ENCODE measurements at regions of chr7 and their contacts with region 1.

Region 1: GRCh38 chr7:123494193-123494796 is 40.1 kb downstream of the IQUB start:
- DNase-seq: no peak
- ATAC-seq: peak in 2 of 4 donors; percentile 58 to 74
- H3K4me3 ChIP-seq: no peak overlapping the region
- H3K27ac ChIP-seq: no peak overlapping the region
- H3K4me1 ChIP-seq: no peaks in the 10 kb centered on the region
- H3K27me3 ChIP-seq: no peaks in the 10 kb centered on the region
- CTCF ChIP-seq: peak; percentile 80

Region 2: DNA sequence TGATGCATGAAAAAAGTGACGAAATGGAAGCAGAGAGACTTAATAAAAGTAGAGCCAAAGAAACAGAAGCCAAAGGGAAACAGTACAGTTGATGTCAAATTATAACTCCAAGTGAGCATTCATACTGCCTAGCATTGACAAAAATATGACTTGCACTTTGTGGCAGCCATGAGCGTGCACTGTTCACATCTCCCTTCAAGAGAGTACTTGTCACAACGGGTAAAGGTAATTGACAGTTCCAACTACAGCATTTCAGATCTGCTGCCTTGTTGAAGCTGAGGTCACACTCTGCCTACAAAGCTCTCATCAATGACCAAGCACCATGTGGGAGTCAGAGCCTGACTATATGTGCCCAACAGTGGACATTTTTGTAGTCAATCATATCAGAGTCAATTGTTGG is 14.2 kb before region 1 on chr7:
- intact Hi-C with region 1: no loop called
- DNase-seq: no peak
- ATAC-seq: no peak
- H3K4me3 ChIP-seq: no peak overlapping the region
- H3K27ac ChIP-seq: no peak overlapping the region
- H3K4me1 ChIP-seq: no peaks in the 10 kb centered on the region
- H3K27me3 ChIP-seq: peaks cover 0 to 5% (median 0%) of the 10 kb centered on the region in 3 donors
- CTCF ChIP-seq: no peak

Region 3: GRCh38 chr7:123534383-123535260 is 40.3 kb after region 1 on chr7 and contains the start of gene IQUB:
- intact Hi-C with region 1: loop called (anchors 2 to 5 kb)
- DNase-seq: peak; percentile 98 to 99
- ATAC-seq: peak; percentile 92 to 94 (median 93)
- H3K4me3 ChIP-seq: peak within 1 kb of the TSS; percentile 63
- H3K27ac ChIP-seq: peak within 1 kb of the TSS; percentile 86
- H3K4me1 ChIP-seq: peaks cover 13% of the 10 kb centered on the region
- H3K27me3 ChIP-seq: no peaks in the 10 kb centered on the region
- CTCF ChIP-seq: no peak
- total RNA-seq, gene IQUB: 0.32 to 3.5 (median 0.49) TPM